PC-9 (cell line): ENCODE measurements at regions of chr18 and their contacts with region 1.

Region 1: DNA sequence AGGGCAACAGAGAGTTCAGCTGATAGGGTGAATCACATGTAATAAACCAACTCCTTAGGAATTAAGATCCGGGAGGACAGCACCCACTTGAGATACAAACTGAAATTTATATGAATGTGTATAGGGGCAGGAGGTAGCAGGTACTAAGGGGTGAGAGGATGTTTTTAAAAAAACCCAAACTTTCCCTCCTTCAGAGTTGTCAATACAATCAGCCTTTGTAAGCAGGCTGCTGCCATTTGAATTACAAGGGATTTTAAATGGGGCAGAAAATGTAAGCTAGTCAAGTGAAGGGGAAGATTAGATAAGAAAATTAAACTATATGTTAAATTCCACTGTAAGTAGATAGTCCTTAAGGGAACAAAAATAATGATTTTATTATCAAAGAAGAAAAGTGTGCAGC is 1239.7 kb upstream of the CELF4 start:
- DNase-seq: no peak
- H3K4me3 ChIP-seq: no peak overlapping the region
- H3K27ac ChIP-seq: no peak overlapping the region
- H3K4me1 ChIP-seq: no peaks in the 10 kb centered on the region
- H3K27me3 ChIP-seq: no peaks in the 10 kb centered on the region
- CTCF ChIP-seq: no peak

Region 2: GRCh38 chr18:38993342-38993741 is 188.1 kb after region 1 on chr18:
- CTCF ChIA-PET with region 1: no interaction called
- POLR2A ChIA-PET with region 1: no interaction called
- intact Hi-C with region 1: no loop called
- DNase-seq: no peak
- H3K4me3 ChIP-seq: no peak overlapping the region
- H3K27ac ChIP-seq: no peak overlapping the region
- H3K4me1 ChIP-seq: no peaks in the 10 kb centered on the region
- H3K27me3 ChIP-seq: no peaks in the 10 kb centered on the region
- CTCF ChIP-seq: no peak

Region 3: DNA sequence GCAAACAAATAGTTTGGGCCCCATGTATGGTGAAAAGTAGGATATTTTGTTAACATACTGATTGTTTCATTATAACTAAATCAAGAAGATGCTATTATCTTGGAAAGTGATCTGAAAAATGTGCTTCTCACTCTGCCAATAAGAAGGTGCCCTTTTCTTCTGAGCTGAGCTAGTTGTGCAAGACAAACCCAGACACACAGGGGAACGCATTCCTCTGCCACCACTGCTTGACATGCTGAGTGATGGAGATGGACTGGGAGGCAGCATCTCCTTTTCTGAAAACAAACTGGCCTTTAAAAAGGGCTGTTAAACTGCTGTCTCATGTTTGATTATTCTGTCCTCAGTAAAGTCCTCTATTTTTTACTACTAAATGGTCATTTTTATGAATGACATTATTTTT is 750.2 kb after region 1 on chr18:
- CTCF ChIA-PET with region 1: no interaction called
- POLR2A ChIA-PET with region 1: interaction called, 11 read pairs
- intact Hi-C with region 1: no loop called
- DNase-seq: no peak
- H3K4me3 ChIP-seq: no peak overlapping the region
- H3K27ac ChIP-seq: no peak overlapping the region
- H3K4me1 ChIP-seq: no peaks in the 10 kb centered on the region
- H3K27me3 ChIP-seq: no peaks in the 10 kb centered on the region
- CTCF ChIP-seq: no peak